Cardiac septum (tissue), 1 donor: ENCODE measurements at regions of chr3 and their contacts with region 1.

Region 1: DNA sequence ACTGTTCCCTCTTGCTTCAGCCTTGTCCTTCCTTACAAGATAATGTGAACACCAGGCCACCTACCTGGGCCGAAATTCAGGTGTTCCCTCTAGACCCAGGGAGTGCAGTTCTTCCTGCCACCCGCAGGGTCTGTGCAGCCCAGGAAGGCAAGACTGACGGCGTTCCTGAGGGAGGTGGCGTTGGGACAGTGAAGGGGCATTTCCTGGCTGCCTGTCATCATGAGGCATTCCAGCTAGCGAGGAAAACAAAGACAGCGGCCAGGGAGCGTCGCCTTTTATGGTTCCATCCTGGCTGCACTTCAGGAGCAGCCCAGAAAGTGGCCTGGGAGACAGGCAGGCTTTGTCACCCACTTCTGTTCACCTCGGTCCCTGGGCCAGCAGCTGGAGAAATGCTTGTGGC is 84.8 kb upstream of the WNT5A start:
- DNase-seq: peak; percentile 84

Region 2: GRCh38 chr3:55607844-55608243 is 35.9 kb after region 1 on chr3:
- intact Hi-C with region 1: no loop called
- DNase-seq: no peak

Region 3: DNA sequence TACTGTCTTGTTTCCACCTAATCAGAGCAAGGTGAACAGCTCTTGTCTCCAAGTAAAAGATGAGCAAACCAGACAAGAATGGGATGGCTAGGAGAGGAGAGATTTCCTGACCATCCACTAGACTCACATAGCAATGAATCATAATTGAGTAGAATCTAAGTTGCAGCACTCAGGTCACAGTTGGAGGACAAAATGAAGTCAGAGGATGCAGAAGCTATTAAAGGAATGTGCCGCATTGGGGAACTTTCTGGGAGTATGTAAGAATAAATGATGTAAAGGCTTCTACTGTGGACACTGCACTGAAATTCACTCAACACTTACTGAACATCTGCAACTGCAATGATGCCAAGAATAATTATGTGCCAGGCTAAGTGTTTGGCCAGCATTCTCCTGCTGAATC is 132.6 kb after region 1 on chr3:
- intact Hi-C with region 1: loop called (anchors 10 kb)
- DNase-seq: no peak